Breast epithelium (tissue), 4 donors: ENCODE measurements at regions of chr2 and their contacts with region 1.

Region 1: GRCh38 chr2:218892693-218893348 is 12.2 kb downstream of the WNT10A start:
- DNase-seq: no peak
- H3K4me3 ChIP-seq: peak overlapping the region; percentile 16 to 64 (median 45)
- H3K27ac ChIP-seq: no peak overlapping the region
- H3K4me1 ChIP-seq: peaks cover 0 to 11% of the 10 kb centered on the region in 2 donors
- H3K27me3 ChIP-seq: peaks cover 4 to 37% of the 10 kb centered on the region in 2 donors
- CTCF ChIP-seq: no peak
- POLR2A ChIP-seq: no peak

Region 2: DNA sequence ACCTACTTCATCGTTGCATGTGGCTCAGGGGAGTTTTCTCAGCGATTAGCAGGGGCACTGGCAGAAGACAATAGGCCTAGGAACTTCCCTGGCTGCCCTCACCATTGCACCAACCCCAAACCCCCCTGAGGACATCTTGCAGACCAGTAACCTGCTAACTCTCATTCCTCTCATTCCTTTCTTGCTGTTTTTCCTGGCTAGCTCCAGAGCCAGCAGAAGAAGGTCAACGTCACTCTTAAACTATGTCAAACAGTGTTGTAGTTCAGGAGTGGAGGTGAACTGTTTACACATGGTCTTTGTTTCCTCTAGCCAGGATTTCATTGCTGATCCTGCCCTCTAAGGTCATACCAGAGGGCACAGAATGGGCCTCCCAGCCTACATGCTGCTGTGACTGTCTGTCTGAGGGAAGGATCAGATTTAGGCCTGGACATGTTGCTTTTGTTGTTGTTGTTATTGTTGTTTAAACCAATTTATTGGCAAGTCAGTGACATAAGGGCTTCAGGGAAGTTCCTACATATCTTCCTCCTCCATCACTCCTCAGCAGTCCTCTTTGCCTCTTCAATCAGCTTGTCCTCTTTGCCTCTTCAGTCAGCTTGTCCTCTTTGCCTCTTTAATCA is 1561.2 kb before region 1 on chr2:
- intact Hi-C with region 1: no loop called
- DNase-seq: peak; percentile 63 to 92
- H3K4me3 ChIP-seq: no peak overlapping the region
- H3K27ac ChIP-seq: peak overlapping the region; percentile 93 to 94
- H3K4me1 ChIP-seq: peaks cover 0 to 7% of the 10 kb centered on the region in 2 donors
- H3K27me3 ChIP-seq: no peaks in the 10 kb centered on the region
- CTCF ChIP-seq: no peak
- POLR2A ChIP-seq: no peak

Region 3: DNA sequence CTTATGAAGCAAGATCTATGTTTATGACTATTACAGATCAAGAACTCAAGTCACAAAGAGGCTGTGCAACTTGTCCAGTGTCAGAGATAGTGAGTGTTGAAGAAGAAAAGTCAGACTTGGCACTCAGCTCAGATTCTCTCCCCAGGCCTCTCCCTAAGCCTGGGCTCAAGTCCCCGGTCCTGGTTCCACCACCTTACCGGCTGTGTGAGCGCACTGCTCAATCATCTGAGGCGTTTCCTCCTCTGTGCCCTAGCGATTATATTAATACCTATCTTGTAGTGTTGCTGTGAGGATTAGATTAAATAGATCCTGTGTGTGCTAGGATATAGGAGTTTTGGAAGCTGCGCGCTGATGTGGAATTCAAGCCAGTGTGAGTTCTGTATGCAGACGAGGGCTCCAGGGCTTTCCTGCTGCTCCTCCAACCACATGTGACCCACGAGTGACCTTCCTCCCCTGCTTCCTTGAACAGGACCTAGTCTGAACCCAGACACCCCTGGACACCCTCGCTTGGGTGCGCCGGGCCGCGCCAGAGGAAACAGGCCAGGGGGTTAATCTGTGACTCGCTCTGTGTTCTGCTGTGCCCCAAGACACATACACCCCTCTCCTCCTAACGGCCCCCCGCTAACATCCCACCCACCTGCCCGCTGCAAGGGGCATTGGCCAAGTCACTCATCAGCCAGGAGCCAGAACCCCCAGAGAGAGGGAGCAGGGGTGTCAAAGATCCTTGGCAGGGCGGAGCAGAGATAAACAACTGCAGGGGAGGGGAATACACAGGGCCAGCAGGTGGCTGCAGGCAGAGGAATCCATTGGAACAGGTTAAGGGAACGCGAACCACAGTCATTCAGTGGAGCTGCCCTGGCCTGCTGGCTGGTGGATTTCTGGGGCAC is 928.3 kb before region 1 on chr2:
- intact Hi-C with region 1: loop called (anchors 5 kb)
- DNase-seq: peak in 1 of 2 donors; percentile 34
- H3K4me3 ChIP-seq: peak overlapping the region in 1 of 3 donors; percentile 4
- H3K27ac ChIP-seq: peak overlapping the region; percentile 74 to 87
- H3K4me1 ChIP-seq: peaks cover 6 to 19% of the 10 kb centered on the region in 2 donors
- H3K27me3 ChIP-seq: no peaks in the 10 kb centered on the region
- CTCF ChIP-seq: peak in 1 of 3 donors; percentile 16
- POLR2A ChIP-seq: no peak

Region 4: GRCh38 chr2:219384083-219384718 is 491.4 kb after region 1 on chr2:
- intact Hi-C with region 1: no loop called
- DNase-seq: no peak
- H3K4me3 ChIP-seq: no peak overlapping the region
- H3K27ac ChIP-seq: no peak overlapping the region
- H3K4me1 ChIP-seq: peaks cover 0 to 6% of the 10 kb centered on the region in 2 donors
- H3K27me3 ChIP-seq: no peaks in the 10 kb centered on the region
- CTCF ChIP-seq: no peak
- POLR2A ChIP-seq: no peak